MCF 10A (cell line): ENCODE measurements at regions of chr3 and their contacts with region 1.

Region 1: DNA sequence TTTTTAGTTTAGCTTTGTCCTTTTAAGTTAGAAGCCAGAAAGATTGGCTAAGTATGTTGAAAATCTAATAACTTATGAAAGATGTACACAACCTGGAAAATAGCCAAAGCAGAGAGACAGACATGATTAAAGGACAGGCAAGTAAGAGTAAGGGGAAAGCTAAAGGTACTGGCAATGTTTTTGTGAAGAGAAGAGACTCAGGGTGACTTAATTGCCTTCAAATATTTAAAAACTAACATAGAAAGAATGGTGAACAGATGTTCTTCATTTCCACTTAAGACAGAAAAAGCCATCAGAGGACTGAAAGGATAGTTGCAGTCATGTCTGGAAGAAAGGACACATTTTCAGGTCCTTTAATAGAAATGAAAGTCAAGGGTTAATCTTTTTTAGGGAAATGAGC is 68.8 kb downstream of the ZNF385D start:
- DNase-seq: no peak
- H3K4me3 Mint-ChIP-seq: no peak overlapping the region
- H3K27ac Mint-ChIP-seq: peak overlapping the region; percentile 14
- H3K4me1 Mint-ChIP-seq: peaks cover 10% of the 10 kb centered on the region
- H3K27me3 Mint-ChIP-seq: no peaks in the 10 kb centered on the region
- CTCF ChIP-seq: no peak

Region 2: GRCh38 chr3:20837676-20838302 is 844.4 kb before region 1 on chr3:
- CTCF ChIA-PET with region 1: no interaction called
- POLR2A ChIA-PET with region 1: no interaction called
- intact Hi-C with region 1: loop called (anchors 5 kb)
- DNase-seq: peak; percentile 34
- H3K4me3 Mint-ChIP-seq: no peak overlapping the region
- H3K27ac Mint-ChIP-seq: no peak overlapping the region
- H3K4me1 Mint-ChIP-seq: peaks cover 12% of the 10 kb centered on the region
- H3K27me3 Mint-ChIP-seq: no peaks in the 10 kb centered on the region
- CTCF ChIP-seq: no peak

Region 3: GRCh38 chr3:22862111-22862510 is 1179.9 kb after region 1 on chr3:
- CTCF ChIA-PET with region 1: no interaction called
- POLR2A ChIA-PET with region 1: no interaction called
- intact Hi-C with region 1: loop called (anchors 10 kb)
- DNase-seq: no peak
- H3K4me3 Mint-ChIP-seq: no peak overlapping the region
- H3K27ac Mint-ChIP-seq: no peak overlapping the region
- H3K4me1 Mint-ChIP-seq: no peaks in the 10 kb centered on the region
- H3K27me3 Mint-ChIP-seq: no peaks in the 10 kb centered on the region
- CTCF ChIP-seq: no peak